ENCODE measurements at regions of chr18 and their contacts with region 1.

Region 1: GRCh38 chr18:48983771-48984355 is 33.1 kb upstream of the SMAD7 start:
- DNase-seq: no peak
- ATAC-seq: no peak
- H3K4me3 ChIP-seq: no peak overlapping the region
- H3K27ac ChIP-seq: no peak overlapping the region
- H3K4me1 ChIP-seq: no peaks in the 10 kb centered on the region
- H3K27me3 ChIP-seq: no peaks in the 10 kb centered on the region
- CTCF ChIP-seq: no peak

Region 2: GRCh38 chr18:49081511-49082155 is 97.8 kb after region 1 on chr18:
- CTCF ChIA-PET with region 1: no interaction called
- POLR2A ChIA-PET with region 1: interaction called, 19 read pairs
- intact Hi-C with region 1: no loop called
- DNase-seq: no peak
- ATAC-seq: no peak
- H3K4me3 ChIP-seq: no peak overlapping the region
- H3K27ac ChIP-seq: no peak overlapping the region
- H3K4me1 ChIP-seq: no peaks in the 10 kb centered on the region
- H3K27me3 ChIP-seq: no peaks in the 10 kb centered on the region
- CTCF ChIP-seq: no peak

Region 3: GRCh38 chr18:49645841-49646351 is 662.0 kb after region 1 on chr18:
- CTCF ChIA-PET with region 1: no interaction called
- POLR2A ChIA-PET with region 1: interaction called, 16 read pairs
- intact Hi-C with region 1: no loop called
- DNase-seq: no peak
- ATAC-seq: no peak
- H3K4me3 ChIP-seq: no peak overlapping the region
- H3K27ac ChIP-seq: no peak overlapping the region
- H3K4me1 ChIP-seq: peaks cover 3% of the 10 kb centered on the region; the same call in 1 of the 2 replicates
- H3K27me3 ChIP-seq: no peaks in the 10 kb centered on the region
- CTCF ChIP-seq: no peak

Measured in PC-3 (cell line).